Activated CD4-positive, alpha-beta T cell treated with anti-CD3 and anti-CD28 coated beads, Interleukin-2, amount 10 ng/mL, durations not matched to agents 24 days and 14 days (primary cell): ENCODE measurements at regions of chr17 and their contacts with region 1.

Region 1: DNA sequence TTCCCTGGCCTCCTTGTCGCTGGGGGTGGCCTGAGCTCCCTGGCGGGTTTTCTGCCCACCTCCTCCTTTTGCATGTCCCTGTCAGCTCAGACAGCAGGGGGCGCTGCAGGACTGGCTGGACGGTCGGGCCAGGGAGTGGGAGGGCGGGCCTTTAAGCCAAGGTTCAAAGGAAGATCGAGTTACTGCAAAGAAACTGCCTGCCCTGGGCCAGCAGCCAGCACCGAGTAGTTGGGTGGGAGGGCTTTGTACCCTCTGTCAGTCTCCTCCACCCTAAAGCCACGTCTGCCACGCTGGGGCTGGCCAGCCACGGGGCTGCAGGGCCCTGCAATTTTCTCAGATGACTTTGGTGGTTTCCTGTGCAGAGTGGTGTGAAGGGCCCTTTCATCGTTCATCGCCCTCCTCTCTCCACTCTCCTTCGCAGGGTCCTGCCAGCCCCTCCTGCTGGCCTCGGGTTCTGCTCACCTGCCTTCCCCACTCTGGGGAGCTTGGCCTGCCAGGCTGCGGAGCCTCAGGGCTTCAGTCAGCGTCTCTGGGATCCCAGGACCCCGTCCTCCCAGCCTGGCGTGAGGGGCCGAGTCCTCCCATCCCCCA is 12.3 kb downstream of the GPR142 start:
- DNase-seq: peak; percentile 97
- H3K4me3 Mint-ChIP-seq: no peak overlapping the region
- H3K27ac Mint-ChIP-seq: no peak overlapping the region
- H3K4me1 Mint-ChIP-seq: peaks cover 3% of the 10 kb centered on the region
- H3K27me3 Mint-ChIP-seq: peaks cover 5% of the 10 kb centered on the region

Region 2: DNA sequence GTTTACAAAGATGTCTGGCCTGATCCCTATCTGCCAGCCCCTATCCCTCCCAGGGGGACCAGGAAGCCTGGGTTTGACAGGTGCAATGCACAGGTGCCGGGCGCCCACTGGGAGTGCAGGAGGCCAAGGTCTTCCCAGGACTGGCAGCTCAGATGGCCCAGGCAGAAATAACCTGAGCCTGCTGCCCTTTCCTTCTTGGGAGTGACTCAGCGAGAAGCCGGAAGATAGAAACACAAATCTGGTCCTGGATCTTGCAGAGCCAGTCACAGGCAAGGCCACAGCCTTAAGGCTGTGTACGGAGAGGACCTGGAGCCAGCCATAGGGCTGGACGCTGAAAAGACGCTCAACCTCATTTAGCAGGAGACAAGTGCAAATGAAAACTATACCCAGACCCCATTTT is 15.4 kb after region 1 on chr17:
- intact Hi-C with region 1: no loop called
- DNase-seq: no peak
- H3K4me3 Mint-ChIP-seq: no peak overlapping the region
- H3K27ac Mint-ChIP-seq: no peak overlapping the region
- H3K4me1 Mint-ChIP-seq: no peaks in the 10 kb centered on the region
- H3K27me3 Mint-ChIP-seq: peaks cover 6% of the 10 kb centered on the region

Region 3: GRCh38 chr17:74457146-74457819 is 77.7 kb after region 1 on chr17:
- intact Hi-C with region 1: loop called (anchors 1 kb)
- DNase-seq: peak; percentile 91
- H3K4me3 Mint-ChIP-seq: no peak overlapping the region
- H3K27ac Mint-ChIP-seq: no peak overlapping the region
- H3K4me1 Mint-ChIP-seq: peaks cover 34% of the 10 kb centered on the region
- H3K27me3 Mint-ChIP-seq: peaks cover 11% of the 10 kb centered on the region

Region 4: DNA sequence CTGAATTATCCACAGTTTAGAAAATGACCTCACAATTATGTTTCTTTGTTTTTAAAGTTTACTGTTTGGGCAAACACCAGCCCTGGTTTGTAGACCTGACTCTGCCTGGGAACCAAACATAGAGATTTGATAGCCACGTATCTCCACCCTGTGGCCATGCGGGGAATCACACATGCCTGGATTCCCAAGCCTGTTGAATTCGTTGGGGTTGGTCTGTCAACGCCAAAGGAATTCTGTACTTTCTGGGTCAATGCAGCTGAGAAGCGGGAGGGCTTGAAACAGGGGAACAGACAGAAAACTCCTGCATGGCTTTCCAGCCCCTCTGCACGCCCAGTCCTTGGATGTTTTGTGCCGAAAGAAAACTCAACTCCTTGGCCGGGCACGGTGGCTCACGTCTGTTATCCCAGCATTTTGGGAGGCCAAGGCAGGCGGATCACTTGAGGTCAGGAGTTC is 113.8 kb after region 1 on chr17:
- intact Hi-C with region 1: loop called (anchors 1 kb)
- DNase-seq: peak; percentile 91
- H3K4me3 Mint-ChIP-seq: no peak overlapping the region
- H3K27ac Mint-ChIP-seq: no peak overlapping the region
- H3K4me1 Mint-ChIP-seq: peaks cover 13% of the 10 kb centered on the region
- H3K27me3 Mint-ChIP-seq: peaks cover 5% of the 10 kb centered on the region

Region 5: GRCh38 chr17:74528491-74529199 is 149.1 kb after region 1 on chr17:
- intact Hi-C with region 1: loop called (anchors 1 kb)
- DNase-seq: no peak
- H3K4me3 Mint-ChIP-seq: no peak overlapping the region
- H3K27ac Mint-ChIP-seq: no peak overlapping the region
- H3K4me1 Mint-ChIP-seq: peaks cover 5% of the 10 kb centered on the region
- H3K27me3 Mint-ChIP-seq: peaks cover 26% of the 10 kb centered on the region

Region 6: GRCh38 chr17:74601944-74602572 is 222.5 kb after region 1 on chr17:
- intact Hi-C with region 1: loop called (anchors 5 kb)
- DNase-seq: peak; percentile 78
- H3K4me3 Mint-ChIP-seq: no peak overlapping the region
- H3K27ac Mint-ChIP-seq: no peak overlapping the region
- H3K4me1 Mint-ChIP-seq: peaks cover 14% of the 10 kb centered on the region
- H3K27me3 Mint-ChIP-seq: peaks cover 28% of the 10 kb centered on the region